CD4-positive, alpha-beta T cell (primary cell): ENCODE measurements at regions of chr19 and their contacts with region 1.

Region 1: DNA sequence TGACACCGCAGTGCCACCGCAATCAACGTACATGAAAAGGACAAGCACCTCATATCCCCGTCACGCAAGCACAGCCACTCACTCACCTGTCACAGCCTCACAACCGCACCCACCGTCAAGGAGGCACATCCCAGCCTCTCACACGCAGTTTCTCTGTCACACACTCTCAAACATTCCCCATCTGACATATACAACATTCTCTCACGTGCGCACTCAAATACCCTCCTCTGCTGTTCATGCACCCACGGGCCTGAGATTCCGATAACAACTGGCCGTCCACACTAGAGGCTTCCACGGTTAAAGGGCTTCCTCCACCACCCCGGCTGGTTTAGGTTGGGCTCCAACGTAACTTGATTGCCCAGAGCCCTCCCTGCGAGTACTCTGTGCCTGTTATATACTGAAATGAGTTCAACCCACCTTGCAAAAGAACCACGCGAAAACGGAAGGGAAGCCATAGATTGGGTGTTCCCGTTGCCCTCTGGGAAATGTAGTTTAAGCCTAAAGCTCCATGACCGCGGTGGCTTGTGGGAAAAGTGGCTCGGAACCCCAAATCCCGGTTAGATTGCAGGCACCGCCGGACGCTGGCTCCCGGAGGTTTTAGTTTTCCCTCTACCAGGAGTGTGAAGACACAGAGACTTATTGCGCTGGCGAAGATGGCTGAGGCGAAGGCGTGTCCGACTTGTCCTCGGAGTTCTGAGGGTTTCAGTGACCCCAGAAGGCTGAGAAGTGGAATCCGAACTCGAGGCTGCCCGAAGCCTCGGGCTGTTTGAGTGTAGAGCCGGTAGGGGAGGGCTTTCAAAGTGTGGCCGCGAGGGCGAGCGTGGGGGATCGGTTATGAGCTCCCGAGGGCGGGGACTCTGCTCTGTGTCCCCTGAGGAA is at the start of gene ZNF573:
- DNase-seq: peak; percentile 62 to 97 (median 77)
- ATAC-seq: peak; percentile 87
- H3K4me3 ChIP-seq: peak within 1 kb of the TSS; percentile 77
- H3K4me3 Mint-ChIP-seq: peak within 1 kb of the TSS; percentile 89
- H3K27ac ChIP-seq: peak within 1 kb of the TSS; percentile 88 to 94
- H3K27ac Mint-ChIP-seq: peak within 1 kb of the TSS; percentile 97
- H3K4me1 ChIP-seq: peaks cover 17% of the 10 kb centered on the region
- H3K4me1 Mint-ChIP-seq: peaks cover 46% of the 10 kb centered on the region
- H3K27me3 ChIP-seq: no peaks in the 10 kb centered on the region
- H3K27me3 Mint-ChIP-seq: no peaks in the 10 kb centered on the region
- CTCF ChIP-seq: no peak
- total RNA-seq, gene ZNF573: 4.6 to 5.0 TPM

Region 2: DNA sequence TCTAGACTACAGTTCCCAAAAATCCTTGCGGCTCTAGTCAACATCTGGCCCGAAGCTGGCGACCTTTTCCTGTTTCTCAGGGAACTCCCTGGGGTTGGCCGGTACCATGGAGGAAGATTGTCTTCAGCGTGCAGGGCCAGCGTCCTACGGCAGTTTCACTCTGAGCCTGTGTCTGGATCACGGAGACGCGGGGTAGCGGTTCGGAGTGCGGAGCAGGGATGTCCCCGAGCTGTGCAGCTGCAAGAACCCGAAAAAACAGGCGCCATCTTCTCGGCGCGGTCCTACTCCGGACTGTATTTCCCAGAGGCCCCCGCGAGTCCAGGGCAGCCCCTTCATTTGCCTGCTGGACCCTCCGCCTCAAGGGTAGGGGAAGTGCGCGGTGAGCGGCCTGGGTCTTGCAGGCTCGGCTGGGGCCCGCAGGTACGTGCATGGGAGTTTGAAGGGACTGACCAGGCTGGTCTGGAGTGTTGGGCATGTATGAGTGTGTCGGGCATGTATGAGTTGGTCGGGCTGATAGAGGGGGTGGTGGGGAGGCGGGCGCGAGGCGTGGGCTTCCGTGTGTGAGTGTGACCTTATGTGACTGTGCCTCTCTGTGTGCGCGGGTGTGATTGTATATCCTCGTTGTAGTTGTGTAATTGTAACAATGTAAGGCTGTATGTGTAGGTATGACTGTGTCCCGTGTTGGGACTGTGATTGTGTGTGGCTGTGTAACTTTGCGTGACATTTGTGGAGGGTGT is 561.3 kb before region 1 on chr19 and contains the start of gene ZNF383:
- CTCF ChIA-PET with region 1: no interaction called
- POLR2A ChIA-PET with region 1: no interaction called
- intact Hi-C with region 1: loop called in 1 of 2 experiments (anchors 10 kb)
- DNase-seq: peak; percentile 66 to 90 (median 78)
- ATAC-seq: peak; percentile 81
- H3K4me3 ChIP-seq: peak within 1 kb of the TSS; percentile 94
- H3K4me3 Mint-ChIP-seq: peak within 1 kb of the TSS; percentile 93
- H3K27ac ChIP-seq: peak within 1 kb of the TSS; percentile 81 to 90
- H3K27ac Mint-ChIP-seq: peak within 1 kb of the TSS; percentile 89
- H3K4me1 ChIP-seq: peaks cover 14% of the 10 kb centered on the region
- H3K4me1 Mint-ChIP-seq: peaks cover 42% of the 10 kb centered on the region
- H3K27me3 ChIP-seq: no peaks in the 10 kb centered on the region
- H3K27me3 Mint-ChIP-seq: no peaks in the 10 kb centered on the region
- CTCF ChIP-seq: no peak
- total RNA-seq, gene ZNF383: 13.1 to 15.7 TPM

Region 3: GRCh38 chr19:37370880-37371661 is 408.3 kb before region 1 on chr19 and contains the start of gene ZNF527:
- CTCF ChIA-PET with region 1: no interaction called
- POLR2A ChIA-PET with region 1: interaction called, 8 read pairs
- intact Hi-C with region 1: loop called in 1 of 2 experiments (anchors 10 kb)
- DNase-seq: peak; percentile 93 to 98 (median 96)
- ATAC-seq: peak; percentile 96
- H3K4me3 ChIP-seq: peak within 1 kb of the TSS; percentile 59
- H3K4me3 Mint-ChIP-seq: peak within 1 kb of the TSS; percentile 96
- H3K27ac ChIP-seq: peak within 1 kb of the TSS; percentile 76 to 85
- H3K27ac Mint-ChIP-seq: peak within 1 kb of the TSS; percentile 96
- H3K4me1 ChIP-seq: peaks cover 17% of the 10 kb centered on the region
- H3K4me1 Mint-ChIP-seq: peaks cover 16% of the 10 kb centered on the region
- H3K27me3 ChIP-seq: no peaks in the 10 kb centered on the region
- H3K27me3 Mint-ChIP-seq: no peaks in the 10 kb centered on the region
- CTCF ChIP-seq: no peak
- total RNA-seq, gene ZNF527: 7.8 to 8.4 TPM

Region 4: DNA sequence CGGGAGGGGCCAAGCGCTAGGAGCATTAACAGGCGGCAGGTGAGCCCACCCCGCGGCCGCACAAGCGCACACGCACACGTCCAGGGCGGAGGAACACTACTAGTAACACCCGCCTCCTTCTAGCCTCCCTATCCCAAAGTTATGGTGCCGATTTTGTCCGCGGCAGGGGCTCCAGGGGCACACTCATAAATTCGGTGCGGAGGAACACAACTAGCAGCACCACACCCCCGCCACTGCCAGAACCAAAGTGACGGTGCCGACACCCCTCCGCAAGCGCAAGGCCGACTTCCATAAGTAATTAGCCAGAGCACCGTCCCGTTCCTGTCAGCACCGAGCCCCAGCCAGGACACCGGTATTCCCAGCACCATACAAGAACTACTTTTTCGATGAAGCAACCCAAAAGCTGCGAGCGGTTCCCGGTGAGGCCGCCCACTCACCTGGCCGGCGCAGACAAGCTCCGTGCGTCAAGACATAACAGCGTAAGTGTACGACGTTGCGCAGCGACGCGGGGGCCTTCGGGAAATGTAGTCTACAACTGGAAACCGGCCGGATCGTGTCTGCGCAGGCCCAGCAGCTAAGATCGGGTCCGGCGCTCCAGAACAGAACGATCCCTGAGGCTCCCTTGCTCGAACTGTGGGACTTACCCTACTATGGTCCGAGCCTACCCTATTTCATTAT is 184.9 kb before region 1 on chr19 and contains the starts of genes ZNF540 and ZNF571:
- CTCF ChIA-PET with region 1: no interaction called
- POLR2A ChIA-PET with region 1: interaction called, 24 read pairs
- intact Hi-C with region 1: loop called in 1 of 2 experiments (anchors 1 kb)
- DNase-seq: peak; percentile 86 to 96 (median 91)
- ATAC-seq: peak; percentile 95
- H3K4me3 ChIP-seq: peak within 1 kb of the TSS; percentile 93
- H3K4me3 Mint-ChIP-seq: peak within 1 kb of the TSS; percentile 97
- H3K27ac ChIP-seq: peak within 1 kb of the TSS; percentile 94 to 97
- H3K27ac Mint-ChIP-seq: peak within 1 kb of the TSS; percentile 98
- H3K4me1 ChIP-seq: peaks cover 15% of the 10 kb centered on the region
- H3K4me1 Mint-ChIP-seq: peaks cover 39% of the 10 kb centered on the region
- H3K27me3 ChIP-seq: no peaks in the 10 kb centered on the region
- H3K27me3 Mint-ChIP-seq: no peaks in the 10 kb centered on the region
- CTCF ChIP-seq: no peak
- total RNA-seq, gene ZNF540: 11.6 to 12.0 TPM
- total RNA-seq, gene ZNF571: 6.7 to 7.0 TPM

Region 5: DNA sequence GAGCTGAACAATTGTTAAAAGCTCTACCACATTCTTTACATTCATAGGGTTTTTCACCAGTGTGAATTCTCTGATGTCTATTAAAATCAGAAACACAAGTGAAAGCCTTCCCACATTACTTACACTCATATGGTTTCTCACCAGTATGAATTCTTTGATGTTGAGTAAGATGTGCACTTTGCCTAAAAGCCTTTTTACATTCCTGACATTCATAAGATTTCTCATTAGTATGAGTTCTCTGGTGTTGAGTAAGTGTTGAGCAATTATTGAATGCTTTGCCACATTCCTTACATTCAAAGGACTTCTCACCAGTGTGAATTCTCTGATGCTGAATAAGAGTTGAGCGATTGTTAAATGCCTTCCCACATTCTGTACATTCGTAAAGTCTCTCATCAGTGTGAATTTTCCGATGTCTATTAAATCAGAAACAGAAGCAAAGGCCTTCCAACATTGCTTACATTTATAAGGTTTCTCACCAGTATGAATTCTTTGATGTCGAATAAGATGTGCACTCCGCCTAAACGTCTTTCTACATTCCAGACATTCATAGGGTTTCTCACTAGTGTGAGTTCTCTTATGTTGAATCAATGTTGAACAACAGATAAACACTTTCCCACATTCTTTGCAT is 109.9 kb before region 1 on chr19:
- CTCF ChIA-PET with region 1: no interaction called
- POLR2A ChIA-PET with region 1: no interaction called
- intact Hi-C with region 1: no loop called
- DNase-seq: no peak
- ATAC-seq: no peak
- H3K4me3 ChIP-seq: no peak overlapping the region
- H3K4me3 Mint-ChIP-seq: no peak overlapping the region
- H3K27ac ChIP-seq: no peak overlapping the region
- H3K27ac Mint-ChIP-seq: no peak overlapping the region
- H3K4me1 ChIP-seq: no peaks in the 10 kb centered on the region
- H3K4me1 Mint-ChIP-seq: no peaks in the 10 kb centered on the region
- H3K27me3 ChIP-seq: no peaks in the 10 kb centered on the region
- H3K27me3 Mint-ChIP-seq: no peaks in the 10 kb centered on the region
- CTCF ChIP-seq: no peak

Region 6: DNA sequence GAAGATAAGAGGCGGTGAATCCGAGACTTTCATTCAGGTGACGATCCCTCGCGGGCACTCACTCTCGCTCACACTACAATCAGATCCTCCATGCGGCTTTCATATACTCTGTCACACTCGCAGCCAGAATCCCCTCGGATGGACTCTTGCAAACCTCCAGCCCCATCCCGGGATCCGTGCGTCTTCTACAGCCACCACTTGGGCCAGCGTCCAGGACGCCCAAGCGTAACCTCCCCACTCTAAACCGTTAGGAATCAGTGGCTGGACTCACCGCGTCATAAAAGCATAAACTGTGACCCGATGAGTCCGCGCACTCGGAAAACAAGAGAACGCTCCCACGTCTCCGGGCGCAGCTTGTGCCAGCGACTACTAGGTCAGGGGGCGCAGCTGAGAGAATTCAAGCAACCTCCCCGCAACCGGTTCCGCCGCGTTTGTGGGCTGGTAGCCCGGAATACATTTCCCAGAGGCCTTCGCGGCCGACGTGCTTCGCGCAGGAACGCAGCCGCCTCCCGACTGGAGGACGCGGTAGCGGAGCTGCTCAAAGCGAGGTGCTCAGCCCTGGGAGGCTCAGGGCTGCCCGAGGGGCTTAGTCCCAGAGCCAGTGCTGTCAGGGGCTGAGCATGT is 87.4 kb before region 1 on chr19:
- CTCF ChIA-PET with region 1: interaction called, 3 read pairs
- POLR2A ChIA-PET with region 1: interaction called, 18 read pairs
- intact Hi-C with region 1: loop called (anchors 1 to 2 kb)
- DNase-seq: peak; percentile 61 to 90 (median 76)
- ATAC-seq: peak; percentile 95
- H3K4me3 ChIP-seq: peak overlapping the region; percentile 67
- H3K4me3 Mint-ChIP-seq: peak overlapping the region; percentile 96
- H3K27ac ChIP-seq: peak overlapping the region in 1 of 2 donors; percentile 32
- H3K27ac Mint-ChIP-seq: peak overlapping the region; percentile 89
- H3K4me1 ChIP-seq: peaks cover 11% of the 10 kb centered on the region
- H3K4me1 Mint-ChIP-seq: peaks cover 12% of the 10 kb centered on the region
- H3K27me3 ChIP-seq: no peaks in the 10 kb centered on the region
- H3K27me3 Mint-ChIP-seq: no peaks in the 10 kb centered on the region
- CTCF ChIP-seq: no peak